ENCODE measurements at regions of chr4 and their contacts with region 1.

Region 1: GRCh38 chr4:83771113-83771705 is 235.3 kb downstream of the GPAT3 start:
- DNase-seq: no peak

Region 2: DNA sequence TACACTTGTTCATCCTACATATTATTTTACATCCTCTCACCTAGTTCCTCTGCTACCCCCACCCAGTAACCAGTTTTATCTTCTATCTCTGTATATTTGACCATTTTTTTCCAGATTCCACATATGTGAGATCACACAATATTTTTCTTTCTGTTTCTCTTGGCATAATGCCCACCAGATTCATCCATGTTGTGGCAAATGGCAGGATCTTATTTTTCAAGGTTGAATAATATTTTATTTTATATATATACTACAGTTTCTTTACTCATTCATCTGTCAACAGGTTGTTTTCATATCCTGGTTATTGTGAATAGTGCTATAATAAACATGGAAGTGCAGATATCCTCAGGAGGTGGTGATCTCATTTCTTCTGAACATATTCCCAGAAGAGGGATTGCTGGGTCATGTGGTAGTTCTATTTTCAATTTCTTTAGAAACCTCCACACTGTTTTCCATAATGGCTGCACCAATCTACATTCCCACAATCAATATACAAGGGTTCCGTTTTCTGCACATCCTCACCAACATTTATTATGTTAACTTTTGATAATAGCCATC is 822.5 kb before region 1 on chr4:
- intact Hi-C with region 1: no loop called
- DNase-seq: no peak

Region 3: GRCh38 chr4:84003046-84003445 is 231.8 kb after region 1 on chr4:
- intact Hi-C with region 1: loop called in 1 of 2 experiments (anchors 2 kb)
- DNase-seq: no peak

Region 4: DNA sequence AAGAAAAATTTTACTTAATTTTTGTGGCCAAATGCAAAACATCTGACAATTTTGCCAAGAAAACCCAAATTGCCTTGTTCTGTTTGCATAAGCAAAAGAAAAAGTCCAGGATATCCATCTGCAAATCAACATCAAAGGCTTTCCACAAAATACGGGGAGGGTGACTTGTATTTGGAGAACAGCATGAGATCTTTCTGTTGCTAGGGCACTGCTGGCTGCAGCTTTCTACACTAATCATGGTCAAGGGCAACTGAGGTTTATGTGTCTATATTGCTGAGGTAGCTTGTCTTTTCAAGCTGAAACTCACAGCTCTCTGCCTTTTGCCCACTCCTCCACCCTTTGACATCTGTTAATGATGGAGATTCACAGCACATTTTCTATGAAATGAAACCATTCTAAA is 338.8 kb after region 1 on chr4:
- intact Hi-C with region 1: no loop called
- DNase-seq: no peak